Heart right ventricle (tissue), 16 donors: ENCODE measurements at regions of chr16 and their contacts with region 1.

Region 1: GRCh38 chr16:88856828-88857733 is at the starts of genes GALNS and TRAPPC2L:
- DNase-seq: peak; percentile 99 to 100
- ATAC-seq: peak; percentile 97 to 98 (median 98)
- H3K4me3 ChIP-seq: peak within 1 kb of the TSS; percentile 71 to 99 (median 93)
- H3K27ac ChIP-seq: peak within 1 kb of the TSS; percentile 32 to 88 (median 82)
- H3K4me1 ChIP-seq: peaks cover 10 to 50% (median 22%) of the 10 kb centered on the region in 9 donors
- H3K27me3 ChIP-seq: no peaks in the 10 kb centered on the region
- CTCF ChIP-seq: no peak
- total RNA-seq, gene GALNS: 11.5 to 18.7 (median 13.8) TPM
- total RNA-seq, gene TRAPPC2L: 44.5 to 58.0 (median 50.9) TPM

Region 2: GRCh38 chr16:88539652-88540345 is 317.3 kb before region 1 on chr16:
- intact Hi-C with region 1: no loop called
- DNase-seq: no peak
- ATAC-seq: no peak
- H3K4me3 ChIP-seq: no peak overlapping the region
- H3K27ac ChIP-seq: no peak overlapping the region
- H3K4me1 ChIP-seq: peaks cover 4 to 11% (median 9%) of the 10 kb centered on the region in 9 donors
- H3K27me3 ChIP-seq: peaks cover 0 to 45% (median 41%) of the 10 kb centered on the region in 7 donors
- CTCF ChIP-seq: no peak

Region 3: DNA sequence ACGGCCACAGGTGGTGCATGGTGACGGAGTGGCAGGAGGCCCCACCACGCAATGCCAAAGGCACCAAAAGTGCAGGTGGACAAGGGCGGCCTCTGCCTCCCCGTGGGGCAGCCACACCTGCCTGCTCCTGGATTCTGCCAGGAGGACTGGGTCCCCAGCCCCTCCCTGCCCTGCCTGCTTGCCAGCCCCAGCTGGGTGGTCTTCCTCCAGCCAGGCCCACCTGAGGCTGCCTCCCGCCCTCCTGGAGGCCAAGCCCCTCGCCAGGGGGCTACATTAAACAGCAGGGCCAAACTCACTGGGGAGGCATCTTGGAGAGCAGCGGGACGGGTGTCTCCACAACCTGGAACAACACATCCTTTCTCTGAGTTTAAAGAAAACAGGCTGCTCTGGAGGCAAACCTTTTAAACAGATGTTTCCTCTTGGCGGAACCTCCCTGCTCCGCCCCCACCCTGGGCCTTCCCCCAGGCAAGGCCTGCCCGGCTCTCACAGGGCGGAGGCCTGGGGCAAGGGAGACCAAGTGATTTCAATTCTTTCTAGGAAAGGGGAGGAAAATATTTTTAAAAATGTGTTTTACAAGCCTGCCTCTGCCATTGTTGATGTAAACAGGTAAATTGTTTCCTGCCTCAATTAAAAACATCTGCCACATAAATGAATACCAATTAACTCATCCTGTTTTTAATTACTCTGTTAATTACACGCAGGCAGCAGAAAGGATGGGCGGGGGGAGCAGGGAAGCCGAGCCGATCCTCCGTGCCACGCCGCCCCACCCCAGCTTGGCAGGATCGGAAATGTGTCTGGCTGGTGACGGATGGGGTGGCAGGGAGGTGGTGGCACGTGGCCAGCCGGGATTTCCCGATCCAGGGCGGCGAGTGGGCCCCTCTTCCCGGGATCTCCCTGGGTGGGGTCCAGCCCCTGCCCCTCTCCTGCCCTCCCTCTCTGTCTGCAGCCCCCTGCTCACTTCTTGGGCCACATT is 63.8 kb after region 1 on chr16:
- intact Hi-C with region 1: loop called in 1 of 10 experiments (anchors 2 kb)
- DNase-seq: peak; percentile 82 to 85
- ATAC-seq: peak; percentile 69 to 90 (median 86)
- H3K4me3 ChIP-seq: peak overlapping the region in 7 of 10 donors; percentile 7 to 48 (median 28)
- H3K27ac ChIP-seq: peak overlapping the region; percentile 58 to 89 (median 78)
- H3K4me1 ChIP-seq: peaks cover 32 to 72% (median 63%) of the 10 kb centered on the region in 9 donors
- H3K27me3 ChIP-seq: no peaks in the 10 kb centered on the region
- CTCF ChIP-seq: no peak